Head of caudate nucleus (tissue), 42 donors: ENCODE measurements at regions of chr6 and their contacts with region 1.

Region 1: GRCh38 chr6:130885392-130886192 is 58.4 kb downstream of the SMLR1 start:
- DNase-seq: peak in 38 of 42 donors; percentile 12 to 94 (median 78)

Region 2: DNA sequence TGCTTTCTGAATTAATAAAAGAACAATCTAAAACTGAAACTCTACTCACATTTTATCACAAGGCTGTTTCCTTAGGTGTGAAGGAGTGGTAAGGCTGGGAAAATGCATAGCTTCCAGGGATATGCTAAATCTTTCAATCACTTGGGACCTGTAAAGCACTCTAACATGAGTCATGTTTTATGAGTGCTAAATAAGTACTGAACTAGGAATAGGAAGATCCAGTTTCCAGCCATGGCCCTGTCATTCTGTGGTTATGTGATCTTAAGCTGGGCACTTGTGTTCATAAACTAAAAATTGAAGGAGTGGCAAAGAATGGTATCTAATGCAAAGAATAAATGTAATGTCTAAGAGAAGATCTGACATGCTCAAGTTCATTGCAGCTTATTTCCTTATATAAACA is 525.9 kb before region 1 on chr6:
- intact Hi-C with region 1: no loop called
- DNase-seq: no peak

Region 3: DNA sequence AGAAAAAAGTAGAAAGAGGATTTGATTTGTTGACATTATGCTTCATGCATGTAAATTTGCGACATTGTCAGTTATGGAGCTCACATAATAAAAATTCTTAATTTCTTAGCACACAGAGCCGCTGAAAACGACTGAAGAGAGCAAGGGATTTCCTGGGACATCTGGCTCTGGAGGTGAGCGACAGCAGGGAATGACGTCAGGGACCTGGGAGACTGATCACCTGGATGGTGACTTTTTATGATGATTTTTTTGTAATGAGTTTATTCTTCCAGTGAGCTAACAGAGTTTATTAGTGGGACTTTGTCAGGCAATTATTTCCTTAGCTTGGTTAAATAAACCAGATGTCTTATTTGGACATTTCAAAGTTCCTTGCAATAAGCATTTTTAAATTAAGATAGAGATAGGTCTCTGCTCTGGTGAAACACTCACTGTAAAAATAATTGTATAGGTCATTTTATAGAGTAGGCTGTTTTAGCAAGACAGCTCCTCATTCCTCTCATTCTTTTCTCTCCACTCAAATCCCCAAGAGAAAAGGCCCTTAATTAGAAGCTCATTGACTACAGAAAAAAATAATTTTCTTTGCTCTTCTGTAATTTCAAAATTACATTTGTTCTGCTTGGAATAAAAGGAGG is 500.4 kb before region 1 on chr6:
- intact Hi-C with region 1: no loop called
- DNase-seq: no peak

Region 4: GRCh38 chr6:130913120-130913519 is 27.5 kb after region 1 on chr6:
- intact Hi-C with region 1: no loop called
- DNase-seq: no peak

Region 5: GRCh38 chr6:131116749-131117360 is 231.3 kb after region 1 on chr6:
- intact Hi-C with region 1: loop called (anchors 5 kb)
- DNase-seq: peak in 2 of 42 donors; percentile 27 to 60

Region 6: DNA sequence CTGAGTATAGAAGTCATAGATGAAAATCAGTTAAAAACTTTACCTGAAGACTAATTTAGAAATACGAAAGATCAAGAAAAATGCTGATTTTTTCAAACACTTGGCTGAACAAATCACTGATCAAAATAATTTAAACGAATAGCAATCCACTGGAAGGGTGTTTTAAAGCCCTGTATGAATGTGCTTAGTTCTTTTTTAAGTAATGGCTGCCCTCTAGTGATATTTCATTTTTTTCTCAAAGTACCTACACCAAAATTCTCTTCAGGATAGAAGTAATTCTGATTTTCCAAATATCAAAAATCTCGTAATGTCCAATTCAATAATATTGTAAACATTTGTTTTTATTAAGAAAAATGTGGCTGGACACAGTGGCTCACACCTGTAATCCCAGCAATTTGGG is 282.2 kb after region 1 on chr6:
- intact Hi-C with region 1: loop called (anchors 10 kb)
- DNase-seq: no peak